Calu3 (cell line): ENCODE measurements at regions of chr17 and their contacts with region 1.

Region 1: GRCh38 chr17:40068917-40069750 is 6.4 kb downstream of the THRA start:
- DNase-seq: peak; percentile 71
- H3K4me3 Mint-ChIP-seq: peak overlapping the region; percentile 63
- H3K27ac Mint-ChIP-seq: no peak overlapping the region
- H3K4me1 Mint-ChIP-seq: peaks cover 94% of the 10 kb centered on the region
- H3K27me3 Mint-ChIP-seq: no peaks in the 10 kb centered on the region
- CTCF ChIP-seq: no peak

Region 2: DNA sequence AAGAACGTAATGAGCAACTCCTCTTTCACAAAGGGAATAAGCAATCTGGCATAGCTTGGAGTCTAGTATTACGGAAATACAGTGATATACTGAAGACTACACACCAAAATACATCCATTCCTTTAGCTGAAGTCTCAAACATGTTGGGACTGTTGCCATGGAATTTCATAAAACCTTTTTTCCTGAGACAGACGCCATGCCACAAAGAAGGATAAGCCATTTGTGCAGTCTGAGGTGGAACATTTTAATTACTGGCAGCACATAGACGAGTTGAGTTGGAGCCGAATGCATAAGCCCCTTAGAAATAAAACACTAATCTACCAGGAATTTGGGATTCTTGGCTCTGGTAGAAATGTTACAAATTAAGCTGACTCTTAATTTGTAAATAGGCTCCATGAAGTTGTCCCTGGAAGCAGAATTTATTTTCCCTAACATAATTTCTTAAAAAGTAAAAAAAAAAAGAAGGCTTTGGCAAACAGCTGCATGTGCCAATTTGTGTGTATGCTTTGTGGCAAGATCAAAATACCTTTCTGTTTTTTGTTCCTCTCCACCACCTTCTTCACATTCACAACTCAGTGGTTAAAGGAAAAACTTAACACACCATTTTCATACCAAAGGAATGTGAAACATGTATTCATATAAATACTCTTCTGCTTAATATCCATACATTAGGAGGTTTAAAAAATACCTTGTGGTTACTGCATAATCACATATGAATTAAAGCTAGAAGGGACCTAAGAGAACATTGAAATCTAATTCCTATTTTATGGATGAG is 305.9 kb before region 1 on chr17:
- CTCF ChIA-PET with region 1: interaction called, 19 read pairs
- intact Hi-C with region 1: no loop called
- DNase-seq: no peak
- H3K4me3 Mint-ChIP-seq: no peak overlapping the region
- H3K27ac Mint-ChIP-seq: no peak overlapping the region
- H3K4me1 Mint-ChIP-seq: peaks cover 12% of the 10 kb centered on the region
- H3K27me3 Mint-ChIP-seq: peaks cover 26% of the 10 kb centered on the region
- CTCF ChIP-seq: no peak

Region 3: DNA sequence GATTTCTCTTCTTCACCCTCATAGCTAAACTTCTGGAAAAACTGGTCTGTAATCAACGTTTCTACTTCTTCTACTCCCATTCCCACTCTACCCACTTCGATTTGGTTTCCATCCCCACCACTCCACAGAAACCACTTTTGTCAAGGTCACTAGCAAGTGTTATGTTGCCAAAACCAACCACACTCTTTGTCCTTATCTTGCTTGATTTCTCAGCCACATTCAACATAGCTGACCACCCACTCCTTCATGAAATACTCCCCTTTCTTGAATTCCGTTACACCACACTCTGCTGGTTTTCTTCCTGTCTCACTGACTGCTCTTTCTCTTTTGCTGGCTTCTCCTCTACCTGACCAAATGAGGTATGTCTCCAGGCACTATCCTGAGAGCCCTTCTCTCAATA is 216.9 kb before region 1 on chr17:
- CTCF ChIA-PET with region 1: no interaction called
- intact Hi-C with region 1: no loop called
- DNase-seq: peak; percentile 59
- H3K4me3 Mint-ChIP-seq: no peak overlapping the region
- H3K27ac Mint-ChIP-seq: no peak overlapping the region
- H3K4me1 Mint-ChIP-seq: peaks cover 10% of the 10 kb centered on the region
- H3K27me3 Mint-ChIP-seq: no peaks in the 10 kb centered on the region
- CTCF ChIP-seq: no peak

Region 4: GRCh38 chr17:40026816-40027613 is 42.1 kb before region 1 on chr17:
- CTCF ChIA-PET with region 1: interaction called, 57 read pairs
- intact Hi-C with region 1: no loop called
- DNase-seq: peak; percentile 100
- H3K4me3 Mint-ChIP-seq: no peak overlapping the region
- H3K27ac Mint-ChIP-seq: no peak overlapping the region
- H3K4me1 Mint-ChIP-seq: peaks cover 30% of the 10 kb centered on the region
- H3K27me3 Mint-ChIP-seq: no peaks in the 10 kb centered on the region
- CTCF ChIP-seq: no peak